GM12878 (cell line): ENCODE measurements at regions of chr4 and their contacts with region 1.

Region 1: GRCh38 chr4:105230287-105230686 is 83.6 kb downstream of the TET2 start:
- DNase-seq: no peak
- ATAC-seq: peak; percentile 42; the same call in 2 of the 3 replicates
- H3K4me3 ChIP-seq: no peak overlapping the region
- H3K27ac ChIP-seq: no peak overlapping the region
- H3K4me1 ChIP-seq: peaks cover 10% of the 10 kb centered on the region; the same call in 1 of the 2 replicates
- H3K27me3 ChIP-seq: no peaks in the 10 kb centered on the region
- CTCF ChIP-seq: no peak
- EP300 ChIP-seq: no peak
- POLR2A ChIP-seq: no peak
- RAD21 ChIP-seq: no peak

Region 2: GRCh38 chr4:105147553-105148161 is 82.6 kb before region 1 on chr4:
- CTCF ChIA-PET with region 1: no interaction called
- POLR2A ChIA-PET with region 1: no interaction called
- RAD21 ChIA-PET with region 1: no interaction called
- SMC1A ChIA-PET with region 1: no interaction called
- in situ Hi-C with region 1: no loop called
- intact Hi-C with region 1: no loop called
- DNase-seq: no peak
- ATAC-seq: peak; percentile 16
- H3K4me3 ChIP-seq: peak overlapping the region; percentile 99
- H3K27ac ChIP-seq: peak overlapping the region; percentile 96
- H3K4me1 ChIP-seq: no peaks in the 10 kb centered on the region
- H3K27me3 ChIP-seq: no peaks in the 10 kb centered on the region
- CTCF ChIP-seq: no peak
- EP300 ChIP-seq: no peak
- POLR2A ChIP-seq: no peak
- RAD21 ChIP-seq: no peak

Region 3: DNA sequence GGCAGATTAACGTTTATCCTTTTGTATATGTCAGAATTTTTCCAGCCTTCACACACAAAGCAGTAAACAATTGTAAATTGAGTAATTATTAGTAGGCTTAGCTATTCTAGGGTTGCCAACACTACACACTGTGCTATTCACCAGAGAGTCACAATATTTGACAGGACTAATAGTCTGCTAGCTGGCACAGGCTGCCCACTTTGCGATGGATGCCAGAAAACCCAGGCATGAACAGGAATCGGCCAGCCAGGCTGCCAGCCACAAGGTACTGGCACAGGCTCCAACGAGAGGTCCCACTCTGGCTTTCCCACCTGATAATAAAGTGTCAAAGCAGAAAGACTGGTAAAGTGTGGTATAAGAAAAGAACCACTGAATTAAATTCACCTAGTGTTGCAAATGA is 11.2 kb after region 1 on chr4:
- CTCF ChIA-PET with region 1: interaction called, 3 read pairs
- POLR2A ChIA-PET with region 1: no interaction called
- RAD21 ChIA-PET with region 1: no interaction called
- SMC1A ChIA-PET with region 1: interaction called, 11 read pairs
- in situ Hi-C with region 1: no loop called
- intact Hi-C with region 1: no loop called
- DNase-seq: no peak
- ATAC-seq: no peak
- H3K4me3 ChIP-seq: no peak overlapping the region
- H3K27ac ChIP-seq: no peak overlapping the region
- H3K4me1 ChIP-seq: peaks cover 6% of the 10 kb centered on the region
- H3K27me3 ChIP-seq: no peaks in the 10 kb centered on the region
- CTCF ChIP-seq: no peak
- EP300 ChIP-seq: no peak
- POLR2A ChIP-seq: no peak
- RAD21 ChIP-seq: no peak